ENCODE measurements at regions of chr1 and their contacts with region 1.

Region 1: DNA sequence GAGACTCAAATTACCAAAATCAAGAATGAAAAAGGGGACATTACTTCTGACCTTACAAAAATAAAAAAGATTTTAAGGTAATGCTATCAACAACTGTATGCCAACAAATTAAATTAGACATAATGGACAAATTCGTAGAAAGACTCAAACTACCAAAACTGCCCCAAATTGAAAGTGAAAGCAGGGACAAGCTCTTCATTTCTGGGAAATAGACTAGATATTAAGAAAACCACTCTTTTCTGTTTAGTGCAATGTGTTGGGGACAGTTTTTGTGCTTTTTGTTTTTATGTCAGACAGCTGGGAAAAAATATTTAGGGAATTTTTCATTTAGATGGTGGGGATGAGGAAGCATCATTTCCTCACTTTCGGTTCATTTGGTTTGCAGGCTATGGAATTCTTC is 4.9 kb upstream of the GBP1 start:
- DNase-seq: no peak
- H3K4me3 Mint-ChIP-seq: no peak overlapping the region
- H3K27ac Mint-ChIP-seq: no peak overlapping the region
- H3K4me1 Mint-ChIP-seq: peaks cover 11% of the 10 kb centered on the region
- H3K27me3 Mint-ChIP-seq: no peaks in the 10 kb centered on the region
- CTCF ChIP-seq: no peak

Region 2: GRCh38 chr1:89005286-89006151 is 64.4 kb before region 1 on chr1:
- CTCF ChIA-PET with region 1: no interaction called
- intact Hi-C with region 1: no loop called
- DNase-seq: no peak
- H3K4me3 Mint-ChIP-seq: no peak overlapping the region
- H3K27ac Mint-ChIP-seq: no peak overlapping the region
- H3K4me1 Mint-ChIP-seq: peaks cover 9% of the 10 kb centered on the region
- H3K27me3 Mint-ChIP-seq: no peaks in the 10 kb centered on the region
- CTCF ChIP-seq: no peak

Region 3: GRCh38 chr1:89088572-89088971 is 18.6 kb after region 1 on chr1:
- CTCF ChIA-PET with region 1: interaction called, 3 read pairs
- intact Hi-C with region 1: loop called (anchors 1 kb)
- DNase-seq: peak; percentile 71
- H3K4me3 Mint-ChIP-seq: peak overlapping the region; percentile 71
- H3K27ac Mint-ChIP-seq: peak overlapping the region; percentile 85
- H3K4me1 Mint-ChIP-seq: peaks cover 12% of the 10 kb centered on the region
- H3K27me3 Mint-ChIP-seq: no peaks in the 10 kb centered on the region
- CTCF ChIP-seq: no peak

Measured in Calu3 (cell line).